SK-N-SH (cell line): ENCODE measurements at regions of chr2 and their contacts with region 1.

Region 1: DNA sequence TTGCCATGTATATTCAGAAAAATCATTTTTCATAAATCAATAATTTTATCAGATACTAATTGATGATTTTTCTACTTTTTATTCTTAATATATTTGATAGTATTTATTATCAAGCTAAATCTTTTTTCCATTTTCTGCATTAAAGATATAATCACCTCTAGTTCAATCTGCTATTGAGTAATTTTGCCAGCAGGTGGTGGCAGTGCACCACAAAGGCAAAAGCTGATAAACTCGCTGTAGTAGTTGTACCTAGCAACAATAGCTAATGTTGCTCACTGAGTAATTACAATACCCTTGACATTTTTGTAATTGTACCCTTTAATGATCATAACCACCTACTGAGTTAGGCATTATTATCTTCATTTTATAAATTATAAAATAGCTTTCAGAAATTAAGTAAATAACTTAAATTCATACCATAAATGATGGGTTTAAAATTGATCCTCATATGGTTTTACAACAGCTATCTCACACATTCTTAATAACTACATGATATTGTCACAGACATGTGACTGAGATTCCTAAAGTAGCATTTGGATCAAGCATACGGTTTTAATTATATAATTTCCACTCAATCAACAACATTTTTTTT is 52.0 kb upstream of the CALCRL start:
- DNase-seq: peak; percentile 22
- H3K4me3 ChIP-seq: no peak overlapping the region; a peak in 1 of 4 replicates
- H3K27ac ChIP-seq: peak overlapping the region in 1 of 2 experiments; percentile 54; a peak in 2 of 4 replicates
- H3K4me1 ChIP-seq: peaks cover 11 to 21% of the 10 kb centered on the region in 2 experiments
- H3K27me3 ChIP-seq: no peaks in the 10 kb centered on the region
- CTCF ChIP-seq: peak; percentile 88
- EP300 ChIP-seq: no peak
- RAD21 ChIP-seq: peak; percentile 98

Region 2: DNA sequence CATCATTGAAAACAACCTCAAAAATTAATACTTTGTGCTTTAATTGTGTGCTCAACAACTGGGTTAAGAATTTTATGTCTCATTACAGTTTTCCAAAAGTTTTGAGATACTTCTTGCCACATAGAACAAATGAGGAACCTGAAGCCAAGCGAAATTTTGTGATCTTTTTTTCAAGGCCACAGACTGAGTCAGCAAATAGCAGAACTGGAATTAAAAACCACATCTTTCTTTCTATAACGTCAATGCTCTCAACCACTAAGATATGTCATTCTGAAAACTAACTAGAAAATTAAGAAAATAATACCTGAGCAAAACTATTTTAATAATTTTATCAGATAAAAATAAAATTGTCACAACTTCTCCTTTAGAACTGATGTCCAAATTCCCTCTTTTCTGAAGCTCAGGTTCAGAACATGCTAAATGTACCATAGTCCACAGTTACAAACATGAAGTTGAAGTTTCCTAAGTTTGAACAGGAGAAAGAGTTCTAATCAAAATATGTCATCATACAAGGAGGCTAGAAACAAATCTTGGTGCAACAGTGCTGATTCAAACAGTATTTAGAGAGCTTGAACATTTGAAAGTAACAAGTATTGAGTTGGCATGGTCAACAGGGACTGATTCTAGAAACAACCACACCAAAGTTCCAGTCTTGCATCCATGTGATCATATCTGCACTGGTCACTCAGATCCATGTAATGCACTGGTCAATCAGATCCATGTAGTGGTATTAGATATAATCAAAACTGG is 24.4 kb before region 1 on chr2:
- CTCF ChIA-PET with region 1: interaction called, 11 read pairs
- POLR2A ChIA-PET with region 1: no interaction called
- DNase-seq: no peak
- H3K4me3 ChIP-seq: no peak overlapping the region
- H3K27ac ChIP-seq: no peak overlapping the region
- H3K4me1 ChIP-seq: peaks cover 0 to 7% of the 10 kb centered on the region in 2 experiments; a peak in 1 of 4 replicates
- H3K27me3 ChIP-seq: no peaks in the 10 kb centered on the region
- CTCF ChIP-seq: no peak
- EP300 ChIP-seq: no peak
- RAD21 ChIP-seq: no peak

Region 3: DNA sequence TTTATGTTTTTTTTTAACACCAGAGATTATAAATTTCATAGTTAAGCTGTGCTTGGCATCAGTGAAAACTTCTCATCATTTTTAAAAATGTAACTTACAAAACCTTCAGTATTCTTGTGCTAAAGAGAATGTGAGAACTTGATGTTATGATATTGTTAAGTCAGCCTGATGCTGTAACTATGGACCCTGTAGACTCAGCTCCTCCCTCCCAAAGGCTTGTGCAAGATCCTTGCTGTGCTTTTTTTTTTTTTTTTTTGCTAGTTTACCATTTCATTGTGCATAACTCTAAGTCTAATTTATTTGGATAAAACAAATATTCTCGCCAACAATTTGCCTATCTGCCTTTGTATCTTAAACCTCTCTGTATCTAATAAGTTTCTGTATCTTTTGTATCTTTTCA is 67.1 kb after region 1 on chr2:
- CTCF ChIA-PET with region 1: interaction called, 12 read pairs
- POLR2A ChIA-PET with region 1: no interaction called
- DNase-seq: no peak
- H3K4me3 ChIP-seq: no peak overlapping the region
- H3K27ac ChIP-seq: no peak overlapping the region
- H3K4me1 ChIP-seq: peaks cover 0 to 2% of the 10 kb centered on the region in 2 experiments; a peak in 2 of 4 replicates
- H3K27me3 ChIP-seq: no peaks in the 10 kb centered on the region
- CTCF ChIP-seq: no peak
- EP300 ChIP-seq: no peak
- RAD21 ChIP-seq: no peak

Region 4: GRCh38 chr2:188280811-188281222 is 780.8 kb after region 1 on chr2:
- CTCF ChIA-PET with region 1: no interaction called
- POLR2A ChIA-PET with region 1: no interaction called
- DNase-seq: no peak
- H3K4me3 ChIP-seq: no peak overlapping the region
- H3K27ac ChIP-seq: no peak overlapping the region
- H3K4me1 ChIP-seq: no peaks in the 10 kb centered on the region
- H3K27me3 ChIP-seq: no peaks in the 10 kb centered on the region
- CTCF ChIP-seq: no peak
- EP300 ChIP-seq: no peak
- RAD21 ChIP-seq: no peak

Region 5: GRCh38 chr2:188524519-188525113 is 1024.6 kb after region 1 on chr2:
- CTCF ChIA-PET with region 1: interaction called, 10 read pairs
- POLR2A ChIA-PET with region 1: no interaction called
- DNase-seq: peak; percentile 28
- H3K4me3 ChIP-seq: no peak overlapping the region
- H3K27ac ChIP-seq: peak overlapping the region; percentile 46 to 71
- H3K4me1 ChIP-seq: peaks cover 21 to 28% of the 10 kb centered on the region in 2 experiments; a peak in 2 of 4 replicates
- H3K27me3 ChIP-seq: no peaks in the 10 kb centered on the region
- CTCF ChIP-seq: peak; percentile 82
- EP300 ChIP-seq: no peak
- RAD21 ChIP-seq: peak; percentile 84